CD4-positive, alpha-beta memory T cell (primary cell): ENCODE measurements at regions of chr10 and their contacts with region 1.

Region 1: GRCh38 chr10:84147347-84147746 is 8.0 kb downstream of the GHITM start:
- DNase-seq: no peak
- H3K4me3 ChIP-seq: no peak overlapping the region
- H3K4me3 Mint-ChIP-seq: no peak overlapping the region
- H3K27ac ChIP-seq: no peak overlapping the region
- H3K27ac Mint-ChIP-seq: peak overlapping the region in 2 of 7 donors; percentile 50 to 65
- H3K4me1 ChIP-seq: no peaks in the 10 kb centered on the region
- H3K4me1 Mint-ChIP-seq: peaks cover 0 to 9% (median 2%) of the 10 kb centered on the region in 4 donors
- H3K27me3 ChIP-seq: no peaks in the 10 kb centered on the region
- H3K27me3 Mint-ChIP-seq: no peaks in the 10 kb centered on the region

Region 2: GRCh38 chr10:84166620-84167288 is 19.4 kb after region 1 on chr10:
- CTCF ChIA-PET with region 1: interaction called, 10 read pairs
- POLR2A ChIA-PET with region 1: no interaction called
- intact Hi-C with region 1: no loop called
- DNase-seq: no peak
- H3K4me3 ChIP-seq: no peak overlapping the region
- H3K4me3 Mint-ChIP-seq: no peak overlapping the region
- H3K27ac ChIP-seq: no peak overlapping the region
- H3K27ac Mint-ChIP-seq: no peak overlapping the region
- H3K4me1 ChIP-seq: no peaks in the 10 kb centered on the region
- H3K4me1 Mint-ChIP-seq: no peaks in the 10 kb centered on the region
- H3K27me3 ChIP-seq: no peaks in the 10 kb centered on the region
- H3K27me3 Mint-ChIP-seq: peaks cover 11 to 17% of the 10 kb centered on the region in 2 donors

Region 3: GRCh38 chr10:84205049-84205852 is 57.9 kb after region 1 on chr10:
- CTCF ChIA-PET with region 1: interaction called, 75 read pairs
- POLR2A ChIA-PET with region 1: no interaction called
- intact Hi-C with region 1: loop called (anchors 1 kb)
- DNase-seq: peak; percentile 38 to 62 (median 56)
- H3K4me3 ChIP-seq: no peak overlapping the region
- H3K4me3 Mint-ChIP-seq: no peak overlapping the region
- H3K27ac ChIP-seq: no peak overlapping the region
- H3K27ac Mint-ChIP-seq: no peak overlapping the region
- H3K4me1 ChIP-seq: no peaks in the 10 kb centered on the region
- H3K4me1 Mint-ChIP-seq: peaks cover 0 to 2% (median 0%) of the 10 kb centered on the region in 4 donors
- H3K27me3 ChIP-seq: no peaks in the 10 kb centered on the region
- H3K27me3 Mint-ChIP-seq: peaks cover 9 to 15% of the 10 kb centered on the region in 2 donors

Region 4: DNA sequence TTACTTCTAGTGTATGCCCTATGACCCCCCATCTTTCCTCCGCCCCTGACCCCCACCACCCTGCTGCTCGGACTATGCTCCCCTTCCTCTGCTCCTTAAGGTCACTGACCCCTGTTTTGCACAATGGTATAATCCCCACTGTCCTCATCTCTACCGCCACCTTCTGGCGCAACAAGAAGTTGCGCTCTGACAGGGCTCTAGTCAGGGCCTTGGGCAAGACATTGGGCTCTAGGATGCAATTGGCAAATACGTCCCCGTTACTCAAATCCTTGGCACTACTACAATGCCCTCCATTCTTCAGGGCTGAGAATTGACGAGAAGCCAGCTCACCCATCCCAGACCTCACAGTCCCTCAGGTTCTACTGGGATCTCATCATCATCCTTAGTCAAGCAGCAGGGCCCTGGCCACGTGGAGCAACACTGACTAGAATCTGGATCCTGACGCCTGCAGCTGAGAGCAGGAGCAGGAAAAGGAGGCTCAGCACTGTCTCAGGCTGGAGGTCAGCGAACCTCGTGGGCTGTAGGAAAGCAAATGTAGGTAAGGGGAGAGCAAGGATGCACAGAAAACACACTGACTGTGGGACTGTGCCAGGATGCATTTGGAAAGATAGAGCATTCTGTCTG is 67.4 kb after region 1 on chr10:
- CTCF ChIA-PET with region 1: interaction called, 17 read pairs
- POLR2A ChIA-PET with region 1: no interaction called
- intact Hi-C with region 1: loop called (anchors 2 kb)
- DNase-seq: peak in 2 of 5 donors; percentile 17 to 40
- H3K4me3 ChIP-seq: no peak overlapping the region
- H3K4me3 Mint-ChIP-seq: peak overlapping the region in 2 of 8 donors; percentile 62 to 66
- H3K27ac ChIP-seq: no peak overlapping the region
- H3K27ac Mint-ChIP-seq: peak overlapping the region in 1 of 7 donors; percentile 75
- H3K4me1 ChIP-seq: no peaks in the 10 kb centered on the region
- H3K4me1 Mint-ChIP-seq: peaks cover 0 to 2% (median under 1%) of the 10 kb centered on the region in 4 donors
- H3K27me3 ChIP-seq: no peaks in the 10 kb centered on the region
- H3K27me3 Mint-ChIP-seq: peaks cover 5 to 10% of the 10 kb centered on the region in 2 donors